ENCODE measurements at regions of chr11 and their contacts with region 1.

Region 1: DNA sequence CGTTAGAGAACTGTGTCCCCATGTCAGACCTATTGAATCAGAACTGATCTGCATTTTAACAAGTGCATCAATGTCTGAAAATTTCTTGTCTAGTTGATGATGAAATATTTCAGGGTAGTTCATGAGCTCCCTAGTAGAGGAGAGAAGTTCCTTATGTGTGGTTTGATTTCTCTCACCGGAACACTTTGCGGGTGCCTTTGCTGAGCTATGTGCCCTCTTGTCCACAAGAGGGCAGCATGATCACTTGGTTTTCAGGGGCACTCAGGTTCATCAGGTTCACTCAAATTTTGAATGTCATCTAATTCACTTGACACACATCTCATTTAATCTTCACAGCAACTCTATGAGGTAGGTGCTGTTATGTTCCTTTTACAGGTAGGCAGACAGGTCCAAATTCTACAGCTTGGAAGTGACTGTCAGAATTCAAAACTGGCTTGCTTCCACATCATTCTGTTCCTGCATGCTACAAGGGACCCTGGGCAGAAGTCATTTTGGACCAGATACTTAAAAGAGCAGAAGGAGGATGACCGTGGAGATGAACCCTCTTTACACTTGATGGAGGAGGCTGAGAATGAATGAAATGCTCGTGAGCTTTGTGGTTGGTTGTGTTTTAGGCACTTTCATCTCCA is 55.6 kb downstream of the P4HA3 start:
- DNase-seq: peak; percentile 39 to 60
- H3K4me3 ChIP-seq: no peak overlapping the region
- H3K27ac ChIP-seq: no peak overlapping the region
- H3K4me1 ChIP-seq: peaks cover 0 to 4% of the 10 kb centered on the region in 2 donors
- H3K27me3 ChIP-seq: no peaks in the 10 kb centered on the region
- CTCF ChIP-seq: peak; percentile 81 to 87 (median 85)
- POLR2A ChIP-seq: no peak

Region 2: GRCh38 chr11:73995247-73995646 is 260.6 kb before region 1 on chr11:
- intact Hi-C with region 1: no loop called
- DNase-seq: no peak
- H3K4me3 ChIP-seq: no peak overlapping the region
- H3K27ac ChIP-seq: no peak overlapping the region
- H3K4me1 ChIP-seq: no peaks in the 10 kb centered on the region
- H3K27me3 ChIP-seq: no peaks in the 10 kb centered on the region
- CTCF ChIP-seq: no peak
- POLR2A ChIP-seq: no peak

Region 3: DNA sequence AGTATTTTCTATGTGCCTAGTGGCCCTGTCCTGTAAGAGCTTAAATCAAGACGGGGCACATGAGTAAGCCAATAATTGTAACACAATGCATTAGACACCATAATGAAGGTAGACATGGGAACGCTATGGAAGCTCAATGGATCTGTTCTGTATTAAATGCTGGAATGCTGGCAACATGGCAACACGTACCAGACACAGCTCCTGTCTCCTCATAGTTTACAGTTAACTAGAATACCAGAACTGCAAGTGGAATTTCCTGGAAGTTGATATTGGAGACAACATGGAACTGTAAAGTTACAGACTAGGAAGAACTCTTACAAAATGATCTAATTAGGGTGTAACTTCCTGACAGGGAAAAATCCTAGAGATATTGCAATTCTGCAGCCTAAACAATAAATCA is 43.2 kb after region 1 on chr11:
- intact Hi-C with region 1: no loop called
- DNase-seq: no peak
- H3K4me3 ChIP-seq: no peak overlapping the region
- H3K27ac ChIP-seq: no peak overlapping the region
- H3K4me1 ChIP-seq: no peaks in the 10 kb centered on the region
- H3K27me3 ChIP-seq: no peaks in the 10 kb centered on the region
- CTCF ChIP-seq: no peak
- POLR2A ChIP-seq: no peak

Region 4: DNA sequence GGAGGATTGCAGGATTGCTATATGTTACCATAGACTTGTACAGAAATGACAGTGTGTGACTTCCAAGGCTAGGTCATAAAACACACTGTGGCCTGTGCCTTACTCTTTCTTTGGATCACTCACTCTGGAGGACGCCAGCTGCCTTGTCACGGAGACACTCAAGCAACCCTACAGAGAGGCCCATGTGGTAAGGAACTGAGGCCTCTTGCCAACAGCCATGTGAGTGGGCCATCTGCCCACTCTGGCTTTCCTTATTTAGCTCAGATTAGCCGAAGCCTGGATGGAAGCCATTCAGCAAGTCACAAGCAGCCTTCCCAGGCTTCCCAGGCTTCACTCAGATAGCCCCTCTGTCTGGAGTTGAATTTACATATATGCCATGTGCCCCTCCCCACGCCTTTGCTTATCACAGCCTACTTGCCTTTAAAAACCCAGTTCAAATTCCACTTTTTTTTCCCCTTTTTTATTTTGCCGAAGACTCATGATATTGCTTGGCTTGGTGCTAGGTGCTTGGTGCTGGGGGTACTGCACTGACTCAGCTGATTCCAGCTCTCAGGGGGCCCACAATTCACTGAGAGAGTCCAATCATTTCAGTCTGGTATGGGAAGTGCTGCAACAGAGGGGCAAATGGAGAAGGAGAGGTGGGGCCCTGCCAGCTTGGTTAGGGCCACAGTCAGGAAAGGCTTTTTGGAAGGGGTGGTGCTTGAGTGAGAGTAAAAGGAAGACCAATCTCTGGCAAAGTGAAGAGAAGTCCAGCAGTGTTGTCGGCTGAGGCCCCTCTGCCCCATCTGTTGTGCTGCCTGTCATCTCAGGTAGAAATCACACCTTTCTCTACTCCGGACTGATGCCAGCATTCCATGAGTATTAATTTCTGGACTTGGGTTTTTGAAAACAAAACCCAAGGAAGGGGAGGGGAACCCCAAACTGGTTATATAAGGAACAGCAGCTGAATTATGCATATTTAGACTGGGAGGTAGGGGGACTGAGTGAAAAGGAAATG is 70.1 kb after region 1 on chr11:
- intact Hi-C with region 1: loop called (anchors 5 kb)
- DNase-seq: peak; percentile 69 to 84
- H3K4me3 ChIP-seq: no peak overlapping the region
- H3K27ac ChIP-seq: peak overlapping the region in 1 of 2 donors; percentile 24
- H3K4me1 ChIP-seq: no peaks in the 10 kb centered on the region
- H3K27me3 ChIP-seq: no peaks in the 10 kb centered on the region
- CTCF ChIP-seq: no peak
- POLR2A ChIP-seq: no peak

Region 5: GRCh38 chr11:74388678-74389327 is 132.9 kb after region 1 on chr11:
- intact Hi-C with region 1: loop called (anchors 10 kb)
- DNase-seq: peak; percentile 42 to 79
- H3K4me3 ChIP-seq: no peak overlapping the region
- H3K27ac ChIP-seq: no peak overlapping the region
- H3K4me1 ChIP-seq: no peaks in the 10 kb centered on the region
- H3K27me3 ChIP-seq: no peaks in the 10 kb centered on the region
- CTCF ChIP-seq: peak; percentile 67 to 90 (median 72)
- POLR2A ChIP-seq: no peak

Region 6: GRCh38 chr11:74434528-74434927 is 178.7 kb after region 1 on chr11:
- intact Hi-C with region 1: no loop called
- DNase-seq: no peak
- H3K4me3 ChIP-seq: no peak overlapping the region
- H3K27ac ChIP-seq: no peak overlapping the region
- H3K4me1 ChIP-seq: no peaks in the 10 kb centered on the region
- H3K27me3 ChIP-seq: no peaks in the 10 kb centered on the region
- CTCF ChIP-seq: no peak
- POLR2A ChIP-seq: no peak

Region 7: GRCh38 chr11:74449369-74449931 is 193.6 kb after region 1 on chr11:
- intact Hi-C with region 1: loop called (anchors 5 kb)
- DNase-seq: peak; percentile 26 to 73
- H3K4me3 ChIP-seq: no peak overlapping the region
- H3K27ac ChIP-seq: peak overlapping the region in 1 of 2 donors; percentile 22
- H3K4me1 ChIP-seq: peaks cover under 1 to 2% of the 10 kb centered on the region in 2 donors
- H3K27me3 ChIP-seq: no peaks in the 10 kb centered on the region
- CTCF ChIP-seq: peak; percentile 71 to 91 (median 83)
- POLR2A ChIP-seq: no peak